K562 (cell line): ENCODE measurements at regions of chr2 and their contacts with region 1.

Region 1: GRCh38 chr2:61789807-61790602 is 63.9 kb downstream of the FAM161A start:
- DNase-seq: no peak
- ATAC-seq: no peak
- H3K4me3 ChIP-seq: no peak overlapping the region
- H3K27ac ChIP-seq: no peak overlapping the region
- H3K4me1 ChIP-seq: peaks cover 7 to 10% of the 10 kb centered on the region in 2 experiments; a peak in 4 of 5 replicates
- H3K27me3 ChIP-seq: peaks cover 0 to 5% of the 10 kb centered on the region in 2 experiments; a peak in 2 of 5 replicates
- CTCF ChIP-seq: no peak
- EP300 ChIP-seq: no peak
- POLR2A ChIP-seq: no peak
- RAD21 ChIP-seq: no peak

Region 2: GRCh38 chr2:61512768-61513398 is 277.1 kb before region 1 on chr2:
- CTCF ChIA-PET with region 1: no interaction called
- POLR2A ChIA-PET with region 1: no interaction called
- in situ Hi-C with region 1: no loop called
- intact Hi-C with region 1: no loop called
- DNase-seq: no peak
- ATAC-seq: no peak
- H3K4me3 ChIP-seq: no peak overlapping the region
- H3K27ac ChIP-seq: no peak overlapping the region
- H3K4me1 ChIP-seq: no peaks in the 10 kb centered on the region
- H3K27me3 ChIP-seq: no peaks in the 10 kb centered on the region
- CTCF ChIP-seq: no peak
- EP300 ChIP-seq: no peak
- POLR2A ChIP-seq: no peak
- RAD21 ChIP-seq: no peak

Region 3: DNA sequence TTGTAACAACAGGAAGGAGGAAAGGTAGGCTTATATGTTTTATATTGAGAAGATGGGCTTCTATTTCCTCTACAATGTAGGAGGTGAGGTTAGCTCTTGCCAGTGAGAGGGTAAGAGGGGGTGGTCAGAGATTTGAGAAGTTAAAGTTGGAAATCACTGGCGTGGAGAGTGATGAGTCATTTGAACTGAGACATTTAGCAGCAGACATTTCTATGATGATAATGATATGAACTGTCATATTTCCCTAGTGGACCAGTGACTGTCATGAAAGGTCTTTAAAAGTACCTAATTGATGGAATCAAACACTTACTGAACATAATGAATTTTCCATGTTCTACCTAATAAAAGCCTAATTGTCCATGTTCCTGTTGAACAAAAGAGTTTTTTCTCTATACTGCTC is 62.3 kb before region 1 on chr2:
- CTCF ChIA-PET with region 1: no interaction called
- POLR2A ChIA-PET with region 1: no interaction called
- in situ Hi-C with region 1: no loop called
- intact Hi-C with region 1: loop called (anchors 10 kb)
- DNase-seq: no peak
- ATAC-seq: no peak
- H3K4me3 ChIP-seq: no peak overlapping the region
- H3K27ac ChIP-seq: no peak overlapping the region
- H3K4me1 ChIP-seq: no peaks in the 10 kb centered on the region
- H3K27me3 ChIP-seq: peaks cover 5 to 9% of the 10 kb centered on the region in 2 experiments; a peak in 3 of 5 replicates
- CTCF ChIP-seq: no peak
- EP300 ChIP-seq: no peak
- POLR2A ChIP-seq: no peak
- RAD21 ChIP-seq: no peak